HEK293T (cell line): ENCODE measurements at regions of chr16 and their contacts with region 1.

Region 1: DNA sequence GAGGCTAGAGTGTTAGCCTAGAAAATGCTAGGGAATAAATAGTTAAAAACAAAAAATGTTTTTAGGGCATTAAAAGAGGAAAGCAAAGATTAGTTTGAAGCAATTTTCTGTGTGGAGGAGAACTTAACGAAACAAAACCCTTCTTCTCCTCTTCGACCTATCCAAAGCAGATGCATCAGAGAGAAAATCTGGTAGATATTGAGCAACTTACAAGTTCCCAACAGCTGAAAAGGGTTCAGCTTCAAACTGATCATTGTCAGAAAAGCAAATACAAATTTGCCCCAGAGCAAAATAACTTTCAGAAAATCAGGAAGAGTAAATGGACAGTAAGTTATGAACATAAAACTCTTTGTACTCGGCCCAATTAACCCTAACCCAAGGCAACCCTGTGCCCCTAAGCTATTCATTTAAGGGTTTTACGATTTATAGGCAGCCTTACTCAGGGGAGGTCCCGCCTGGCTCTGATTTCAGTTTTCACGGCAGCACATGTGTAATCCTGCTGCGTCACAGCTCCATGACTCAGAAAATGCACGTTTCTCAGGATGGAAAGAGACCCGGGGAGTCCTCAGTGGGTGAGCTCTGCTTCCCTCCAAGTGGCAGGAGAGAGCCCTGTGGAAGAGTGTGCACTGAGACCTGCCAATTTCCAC is 405.7 kb upstream of the SALL1 start:
- DNase-seq: peak; percentile 53

Region 2: DNA sequence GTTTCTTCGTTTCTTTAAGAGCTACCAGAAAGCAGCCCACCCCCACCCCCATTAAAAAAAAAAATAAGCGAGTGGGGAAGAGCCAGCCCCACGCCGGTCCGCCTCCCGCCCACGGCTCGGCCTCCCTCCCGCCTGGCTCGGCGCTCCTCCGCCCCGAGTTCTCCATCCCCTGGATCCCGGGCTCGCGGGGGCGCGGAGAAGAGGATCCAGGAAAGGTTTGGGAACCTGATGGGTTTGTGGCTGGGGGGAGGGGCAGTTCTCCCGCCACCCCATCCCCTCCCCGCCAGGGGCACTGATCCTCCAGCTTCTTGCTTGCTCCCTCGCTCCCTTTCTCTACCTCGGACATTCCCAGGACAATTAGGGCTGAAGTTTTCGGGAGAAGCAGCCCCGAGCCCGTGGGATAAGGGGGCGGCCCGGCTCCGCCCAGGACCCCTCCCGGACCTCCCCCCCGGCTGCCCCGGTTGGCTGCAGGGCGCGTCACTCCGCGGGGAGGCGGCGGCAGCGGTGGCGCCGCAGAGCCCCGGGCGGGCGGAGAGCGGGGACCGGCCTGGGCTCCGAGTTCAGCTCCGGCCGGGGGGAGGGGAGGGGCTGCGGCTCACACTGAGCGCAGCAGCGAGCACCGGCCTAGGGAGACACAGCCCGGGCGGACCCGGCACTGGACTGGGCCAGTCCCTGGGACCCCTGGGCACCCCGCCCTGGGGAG is 404.7 kb before region 1 on chr16:
- CTCF ChIA-PET with region 1: no interaction called
- POLR2A ChIA-PET with region 1: interaction called, 10 read pairs
- DNase-seq: peak; percentile 81